BJ (cell line): ENCODE measurements at regions of chr3 and their contacts with region 1.

Region 1: GRCh38 chr3:13009132-13009960 is 63.9 kb downstream of the IQSEC1 start:
- DNase-seq: no peak
- H3K4me3 ChIP-seq: no peak overlapping the region
- H3K27me3 ChIP-seq: peaks cover 2% of the 10 kb centered on the region
- CTCF ChIP-seq: no peak

Region 2: GRCh38 chr3:12994607-12995388 is 14.5 kb before region 1 on chr3:
- CTCF ChIA-PET with region 1: interaction called, 23 read pairs
- POLR2A ChIA-PET with region 1: no interaction called
- DNase-seq: peak; percentile 34
- H3K4me3 ChIP-seq: peak overlapping the region; percentile 76
- H3K27me3 ChIP-seq: no peaks in the 10 kb centered on the region
- CTCF ChIP-seq: peak; percentile 85